ENCODE measurements at regions of chr19 and their contacts with region 1.

Region 1: GRCh38 chr19:5827891-5828660 is 11.4 kb downstream of the FUT6 start:
- DNase-seq: peak; percentile 97
- H3K4me3 Mint-ChIP-seq: peak overlapping the region; percentile 94
- H3K27ac Mint-ChIP-seq: peak overlapping the region; percentile 97
- H3K4me1 Mint-ChIP-seq: peaks cover 14% of the 10 kb centered on the region
- H3K27me3 Mint-ChIP-seq: no peaks in the 10 kb centered on the region

Region 2: DNA sequence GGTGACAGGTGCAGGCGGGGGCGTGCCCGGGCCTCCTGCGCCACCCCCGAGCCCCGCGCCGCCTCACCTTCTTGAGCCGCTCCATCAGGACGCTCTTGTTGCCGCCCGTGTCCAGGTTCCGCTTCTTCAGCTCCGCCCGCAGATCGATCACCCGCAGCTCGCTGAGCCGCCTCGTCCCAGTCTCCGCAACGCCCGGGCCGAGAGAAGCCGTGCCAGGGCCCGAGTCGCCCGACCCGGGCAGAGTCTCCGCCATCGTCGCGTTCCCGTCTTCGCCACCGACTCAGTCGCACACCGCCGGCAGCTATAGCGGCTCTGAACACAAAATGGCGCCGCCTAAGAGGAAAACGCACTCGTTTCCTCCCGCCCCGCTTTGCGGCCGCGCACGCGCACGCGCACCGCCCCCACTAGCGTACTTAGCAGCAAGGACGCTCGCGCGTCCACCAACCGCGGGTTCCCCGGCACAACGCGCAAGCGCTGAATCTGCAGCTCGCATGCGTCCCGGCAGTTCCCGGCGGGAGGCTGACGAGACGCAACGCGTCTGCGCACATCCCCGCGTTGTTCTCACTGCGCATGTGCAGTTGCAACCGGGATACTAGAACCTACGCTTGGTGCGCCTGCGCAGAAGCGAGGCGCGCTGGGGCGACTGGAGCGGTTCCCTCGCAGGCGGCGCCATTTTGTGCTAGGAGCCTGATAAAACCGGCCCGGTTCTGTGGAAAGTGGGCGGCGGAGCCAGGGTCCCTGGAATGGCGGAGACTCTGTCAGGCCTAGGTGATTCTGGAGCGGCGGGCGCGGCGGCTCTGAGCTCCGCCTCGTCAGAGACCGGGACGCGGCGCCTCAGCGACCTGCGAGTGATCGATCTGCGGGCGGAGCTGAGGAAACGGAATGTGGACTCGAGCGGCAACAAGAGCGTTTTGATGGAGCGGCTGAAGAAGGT is 205.3 kb before region 1 on chr19 and contains the starts of genes SAFB and SAFB2:
- CTCF ChIA-PET with region 1: interaction called, 4 read pairs
- POLR2A ChIA-PET with region 1: interaction called, 16 read pairs
- DNase-seq: peak; percentile 100
- H3K4me3 Mint-ChIP-seq: peak within 1 kb of the TSS; percentile 99
- H3K27ac Mint-ChIP-seq: peak within 1 kb of the TSS; percentile 96
- H3K4me1 Mint-ChIP-seq: peaks cover 65% of the 10 kb centered on the region
- H3K27me3 Mint-ChIP-seq: no peaks in the 10 kb centered on the region
- total RNA-seq, gene SAFB: 124 to 126 TPM
- total RNA-seq, gene SAFB2: 90.5 to 90.7 TPM

Region 3: DNA sequence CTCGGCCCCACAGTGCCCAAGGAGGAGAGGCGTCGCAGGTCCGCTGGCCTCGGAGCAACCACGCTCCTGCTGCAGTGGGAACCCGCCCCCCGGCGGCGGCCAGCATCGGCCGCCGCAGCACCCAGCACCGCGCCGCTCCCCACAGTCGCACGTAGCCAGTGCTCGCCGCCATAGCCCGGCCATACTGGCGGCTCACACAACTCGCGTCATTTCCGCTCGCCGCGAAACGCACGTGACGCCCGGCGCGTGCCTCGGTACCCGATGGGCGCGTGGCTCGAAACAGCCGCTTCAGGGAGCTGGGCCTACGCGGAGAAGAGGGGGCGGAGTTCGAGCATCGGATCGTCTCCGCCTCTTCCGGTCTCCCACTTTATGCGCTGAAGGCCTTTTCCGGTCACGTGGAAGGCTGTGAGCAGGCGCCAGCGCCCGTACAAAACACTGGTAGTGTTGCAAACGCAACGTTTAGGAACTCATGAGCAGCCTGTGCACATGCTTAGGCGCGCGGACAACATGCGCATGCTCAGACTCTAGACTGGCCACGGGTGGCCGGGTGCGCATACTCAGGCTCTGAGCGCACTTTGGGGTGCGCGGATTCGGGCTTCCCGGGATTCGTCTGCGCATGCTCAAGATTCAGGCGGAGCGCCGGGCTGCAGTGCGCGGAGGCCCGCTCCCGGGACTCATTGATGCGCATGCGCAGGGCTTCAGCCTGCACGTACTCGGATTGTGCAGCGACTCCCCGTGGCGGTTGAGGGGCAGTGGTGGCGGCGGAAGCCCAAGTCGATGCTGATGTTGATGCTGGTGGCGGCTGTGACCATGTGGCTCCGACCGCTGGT is 107.9 kb before region 1 on chr19 and contains the starts of genes CATSPERD and LONP1:
- CTCF ChIA-PET with region 1: interaction called, 11 read pairs
- POLR2A ChIA-PET with region 1: interaction called, 10 read pairs
- DNase-seq: peak; percentile 99
- H3K4me3 Mint-ChIP-seq: peak within 1 kb of the TSS; percentile 86
- H3K27ac Mint-ChIP-seq: peak within 1 kb of the TSS; percentile 96
- H3K4me1 Mint-ChIP-seq: peaks cover 34% of the 10 kb centered on the region
- H3K27me3 Mint-ChIP-seq: peaks cover 4% of the 10 kb centered on the region
- total RNA-seq, gene CATSPERD: not detected
- total RNA-seq, gene LONP1: 98.7 to 106 TPM

Region 4: DNA sequence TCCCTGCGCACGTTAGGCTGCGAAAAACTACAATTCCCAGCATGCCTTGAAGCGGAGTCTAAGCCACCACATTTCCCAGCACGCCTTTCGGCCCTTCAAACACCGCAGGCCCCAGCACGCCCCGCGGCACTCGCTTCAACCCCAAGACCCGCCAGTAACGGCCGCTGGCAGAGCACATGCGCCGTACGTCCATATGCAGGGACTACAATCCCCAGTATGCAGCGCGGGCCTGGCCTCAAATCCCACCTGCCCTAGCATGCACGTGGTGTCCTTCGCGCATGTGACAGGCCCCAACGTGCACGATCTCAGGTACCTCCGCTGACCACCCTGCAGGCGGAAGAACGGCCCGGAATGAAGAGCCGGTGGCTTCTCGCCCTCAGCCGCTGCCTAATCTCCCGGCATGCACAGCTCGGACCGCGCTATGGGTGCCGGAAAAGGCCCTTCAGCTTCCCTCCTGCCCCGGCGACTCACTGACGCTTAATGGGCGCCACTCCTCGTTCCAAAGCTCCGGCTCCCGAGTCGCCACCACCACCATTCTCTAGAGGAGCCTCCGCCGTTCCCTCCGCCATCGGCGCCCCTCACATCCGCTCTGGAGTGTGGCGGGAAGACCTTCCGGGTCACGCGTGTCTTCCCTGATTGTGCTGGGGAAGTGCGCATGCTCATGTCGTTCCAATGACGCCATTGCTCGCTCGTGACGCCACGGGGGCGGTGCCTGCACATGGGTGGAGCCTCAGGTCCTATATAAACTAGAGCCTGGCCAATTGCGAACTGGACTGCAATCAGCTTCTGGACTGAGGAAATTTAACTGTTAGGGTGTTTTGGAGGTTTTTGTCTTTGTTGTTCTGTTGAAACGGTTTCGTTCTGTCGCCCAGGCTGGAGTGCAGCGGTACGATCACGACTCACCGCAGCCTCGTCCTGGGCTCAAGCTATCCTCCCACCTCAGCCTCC is 37.2 kb before region 1 on chr19 and contains the start of gene DUS3L:
- CTCF ChIA-PET with region 1: interaction called, 5 read pairs
- POLR2A ChIA-PET with region 1: interaction called, 17 read pairs
- DNase-seq: peak; percentile 97
- H3K4me3 Mint-ChIP-seq: peak within 1 kb of the TSS; percentile 99
- H3K27ac Mint-ChIP-seq: peak within 1 kb of the TSS; percentile 100
- H3K4me1 Mint-ChIP-seq: peaks cover 16% of the 10 kb centered on the region
- H3K27me3 Mint-ChIP-seq: no peaks in the 10 kb centered on the region
- total RNA-seq, gene DUS3L: 38.3 to 42.1 TPM

Region 5: GRCh38 chr19:5803752-5804515 is 24.1 kb before region 1 on chr19:
- CTCF ChIA-PET with region 1: interaction called, 58 read pairs
- POLR2A ChIA-PET with region 1: interaction called, 30 read pairs
- DNase-seq: peak; percentile 94
- H3K4me3 Mint-ChIP-seq: peak overlapping the region; percentile 63
- H3K27ac Mint-ChIP-seq: no peak overlapping the region
- H3K4me1 Mint-ChIP-seq: peaks cover 23% of the 10 kb centered on the region
- H3K27me3 Mint-ChIP-seq: peaks cover 38% of the 10 kb centered on the region

Region 6: DNA sequence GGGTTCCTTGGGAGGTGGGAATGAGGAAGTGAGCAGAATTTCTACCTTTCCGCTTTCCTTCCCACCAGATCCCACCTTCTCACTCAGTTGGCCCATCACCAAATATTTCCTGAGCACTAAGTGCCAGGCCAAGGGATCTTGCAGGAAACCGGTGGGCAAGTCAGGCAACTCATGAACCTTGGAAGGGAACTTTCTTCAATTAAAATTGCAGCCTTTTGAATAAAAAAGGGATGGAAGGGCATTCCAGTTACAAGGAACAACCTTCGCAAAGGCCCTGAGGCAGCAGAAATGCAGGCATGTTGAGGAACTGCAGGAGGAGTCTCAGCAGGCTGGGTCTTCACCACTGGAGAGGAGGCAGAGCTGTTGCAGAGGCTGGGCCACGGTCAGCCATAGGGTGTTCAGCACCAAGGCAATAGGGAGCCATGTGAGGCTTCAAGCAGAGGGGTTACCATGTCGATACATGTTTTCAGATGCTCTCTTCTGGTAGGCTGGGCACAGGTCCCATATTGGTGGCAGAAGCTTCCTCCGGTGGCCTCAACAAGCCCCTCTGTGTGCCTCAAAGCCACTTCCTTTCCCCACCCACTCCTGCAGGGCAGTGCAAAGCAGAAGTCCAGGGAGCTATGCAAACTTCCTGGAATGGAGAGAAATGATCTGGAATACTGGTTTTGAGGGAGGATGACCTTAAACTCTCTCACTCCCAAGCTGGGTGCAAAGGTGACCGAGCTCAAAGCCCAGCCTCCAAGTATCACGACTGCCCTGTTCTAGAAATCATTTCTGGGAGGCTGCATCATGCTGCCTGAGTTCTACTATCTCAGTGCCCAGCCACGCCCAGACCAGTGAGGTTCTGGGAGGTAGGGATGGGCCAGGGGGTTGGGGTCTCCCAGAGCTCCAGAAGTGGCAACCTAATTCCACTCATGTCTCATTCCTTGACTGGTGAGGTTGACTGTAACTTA is 11.3 kb after region 1 on chr19 and contains the start of gene FUT6:
- CTCF ChIA-PET with region 1: interaction called, 3 read pairs
- POLR2A ChIA-PET with region 1: interaction called, 14 read pairs
- DNase-seq: no peak
- H3K4me3 Mint-ChIP-seq: no peak within 1 kb of the TSS
- H3K27ac Mint-ChIP-seq: no peak within 1 kb of the TSS
- H3K4me1 Mint-ChIP-seq: peaks cover 2% of the 10 kb centered on the region
- H3K27me3 Mint-ChIP-seq: no peaks in the 10 kb centered on the region
- total RNA-seq, gene FUT6: not detected

Region 7: GRCh38 chr19:5882421-5882968 is 54.4 kb after region 1 on chr19:
- CTCF ChIA-PET with region 1: no interaction called
- POLR2A ChIA-PET with region 1: no interaction called
- DNase-seq: no peak
- H3K4me3 Mint-ChIP-seq: no peak overlapping the region
- H3K27ac Mint-ChIP-seq: no peak overlapping the region
- H3K4me1 Mint-ChIP-seq: no peaks in the 10 kb centered on the region
- H3K27me3 Mint-ChIP-seq: peaks cover 3% of the 10 kb centered on the region

Region 8: DNA sequence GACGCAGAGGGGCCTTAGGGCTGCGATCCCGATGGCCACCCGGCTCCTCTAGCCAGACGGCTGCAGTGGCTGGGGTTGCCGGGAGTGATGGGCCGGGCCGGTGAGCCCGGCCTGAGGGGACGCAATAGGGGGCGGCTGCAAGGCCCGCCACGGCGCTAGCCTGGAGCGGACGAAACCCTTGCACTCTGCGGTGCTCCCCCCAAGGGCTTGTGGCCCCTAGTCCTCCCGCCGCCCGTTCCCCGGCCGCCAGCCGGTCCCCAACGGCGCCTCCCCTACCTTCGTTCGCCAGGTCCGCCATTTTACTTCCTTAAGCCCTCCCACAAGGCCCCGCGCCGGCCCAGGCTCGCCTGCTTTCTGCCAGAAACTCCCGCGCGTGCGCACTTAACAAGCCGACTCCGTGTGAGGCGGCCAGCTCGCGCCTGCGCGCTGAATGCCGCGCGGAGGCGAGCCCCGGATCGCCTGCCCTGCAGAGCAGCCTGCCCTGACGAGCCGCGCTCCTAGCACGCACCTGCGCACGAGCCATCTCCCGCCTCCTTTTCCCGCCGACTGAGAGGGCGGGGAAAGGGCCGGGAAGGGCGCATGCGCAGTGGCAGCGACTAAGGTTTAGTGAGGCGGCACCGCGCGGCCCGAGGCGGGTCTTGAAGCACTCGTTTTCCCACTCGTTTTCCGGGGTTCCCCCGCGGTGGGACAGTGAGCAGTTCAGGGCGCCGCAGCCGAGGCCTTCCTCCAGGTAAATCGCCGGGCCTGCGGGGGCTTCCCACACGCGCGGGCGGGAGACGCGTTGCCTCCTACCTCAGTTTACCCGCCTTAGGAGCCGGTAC is 149.9 kb after region 1 on chr19 and contains the start of gene RANBP3:
- CTCF ChIA-PET with region 1: no interaction called
- POLR2A ChIA-PET with region 1: interaction called, 11 read pairs
- DNase-seq: peak; percentile 99
- H3K4me3 Mint-ChIP-seq: peak within 1 kb of the TSS; percentile 96
- H3K27ac Mint-ChIP-seq: peak within 1 kb of the TSS; percentile 89
- H3K4me1 Mint-ChIP-seq: peaks cover 64% of the 10 kb centered on the region
- H3K27me3 Mint-ChIP-seq: no peaks in the 10 kb centered on the region
- total RNA-seq, gene RANBP3: 78.1 to 85.1 TPM

Measured in activated CD4-positive, alpha-beta memory T cell treated with anti-CD3 and anti-CD28 coated beads, Interleukin-2, amount 10 ng/mL, durations not matched to agents 7 days and 5 days (primary cell).